GM12878 (cell line): ENCODE measurements at regions of chr1 and their contacts with region 1.

Region 1: DNA sequence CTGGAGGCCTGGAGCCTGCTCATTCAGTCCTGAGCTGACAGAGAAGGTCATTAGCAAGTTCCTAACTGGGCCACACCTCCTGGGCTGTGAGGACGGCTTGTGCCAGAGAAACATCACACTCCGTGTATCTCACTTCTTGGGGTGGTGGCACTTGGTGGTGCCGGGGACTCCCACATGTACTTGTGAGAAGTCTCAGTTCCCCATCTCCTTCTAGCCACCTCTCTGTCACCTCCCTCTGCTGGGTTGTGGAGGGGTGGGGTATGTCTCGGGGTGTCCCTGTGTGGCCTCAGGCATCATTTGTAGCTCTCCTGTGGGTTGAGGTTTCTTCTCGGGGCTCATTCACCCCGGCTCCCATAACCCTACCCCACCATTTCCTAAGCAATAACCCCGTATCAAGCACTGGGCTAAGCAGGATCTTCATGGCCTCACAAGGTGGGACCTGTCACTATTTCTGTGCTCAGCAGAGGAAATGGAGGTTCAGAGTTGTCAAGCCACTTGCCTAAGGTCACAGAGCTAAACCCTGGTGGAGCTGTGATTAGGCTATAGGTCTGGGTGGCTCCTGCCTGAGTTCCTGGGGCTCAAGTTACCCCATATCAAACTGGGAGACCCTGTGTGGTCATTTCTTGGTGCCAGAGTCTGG is 62.5 kb downstream of the UBIAD1 start:
- DNase-seq: peak; percentile 72
- ATAC-seq: peak; percentile 96
- H3K4me3 ChIP-seq: no peak overlapping the region
- H3K27ac ChIP-seq: no peak overlapping the region; the same call in 1 of the 2 replicates
- H3K4me1 ChIP-seq: peaks cover 16% of the 10 kb centered on the region
- H3K27me3 ChIP-seq: peaks cover 0 to 3% of the 10 kb centered on the region in 2 experiments; a peak in 2 of 4 replicates
- CTCF ChIP-seq: no peak
- EP300 ChIP-seq: peak; percentile 21 to 67; a peak in 2 of 4 replicates
- POLR2A ChIP-seq: no peak
- RAD21 ChIP-seq: no peak

Region 2: DNA sequence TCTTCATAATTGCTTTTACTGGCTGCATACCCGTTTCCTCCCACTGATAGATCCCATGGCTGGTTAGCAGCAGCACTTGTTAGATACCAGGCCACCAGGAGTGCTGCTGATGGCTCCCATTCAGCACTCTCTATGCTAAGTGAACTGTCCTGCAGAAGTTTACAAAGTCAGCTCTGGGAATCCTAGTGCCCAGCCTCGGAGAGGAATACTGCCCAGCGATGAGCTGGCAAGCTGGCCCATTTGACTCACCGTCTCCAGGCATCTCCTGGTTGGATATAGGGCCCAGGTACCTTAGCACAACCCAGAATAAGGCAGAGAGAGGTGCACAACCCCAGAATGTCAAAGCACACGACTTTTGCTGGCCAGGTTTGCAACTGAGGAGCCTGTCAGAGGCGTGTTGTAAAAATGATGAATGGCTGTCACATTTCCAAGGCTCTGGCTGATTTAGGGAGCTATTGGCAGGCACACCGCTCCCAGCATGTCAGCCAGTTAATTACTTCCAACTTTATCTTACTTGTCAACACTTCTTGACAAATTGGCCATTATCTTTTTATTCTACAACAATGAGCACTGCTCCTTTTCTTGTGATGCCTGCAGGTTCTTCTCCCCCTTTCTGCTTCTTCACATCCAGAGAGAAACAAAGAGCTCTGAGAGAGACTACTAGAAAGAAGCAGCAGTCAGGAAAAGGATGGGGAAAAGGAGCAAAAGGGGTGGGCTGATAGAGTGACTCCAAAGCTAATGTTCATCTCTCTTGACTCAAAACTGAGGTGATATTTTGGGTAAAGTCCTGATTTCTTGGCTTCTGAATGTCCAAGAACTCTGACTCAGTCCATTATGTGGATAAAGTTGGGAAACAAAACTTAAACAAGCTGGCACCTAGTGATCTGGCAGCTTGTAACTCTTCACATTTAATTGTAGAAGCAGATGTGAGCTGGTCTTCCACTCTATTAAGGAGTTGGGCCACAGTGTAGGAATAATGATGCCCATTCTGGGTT is 157.2 kb before region 1 on chr1:
- CTCF ChIA-PET with region 1: no interaction called
- POLR2A ChIA-PET with region 1: no interaction called
- RAD21 ChIA-PET with region 1: no interaction called
- SMC1A ChIA-PET with region 1: no interaction called
- in situ Hi-C with region 1: no loop called
- intact Hi-C with region 1: no loop called
- DNase-seq: no peak
- ATAC-seq: no peak
- H3K4me3 ChIP-seq: no peak overlapping the region
- H3K27ac ChIP-seq: no peak overlapping the region
- H3K4me1 ChIP-seq: no peaks in the 10 kb centered on the region
- H3K27me3 ChIP-seq: no peaks in the 10 kb centered on the region
- CTCF ChIP-seq: no peak
- EP300 ChIP-seq: no peak
- POLR2A ChIP-seq: no peak
- RAD21 ChIP-seq: no peak

Region 3: DNA sequence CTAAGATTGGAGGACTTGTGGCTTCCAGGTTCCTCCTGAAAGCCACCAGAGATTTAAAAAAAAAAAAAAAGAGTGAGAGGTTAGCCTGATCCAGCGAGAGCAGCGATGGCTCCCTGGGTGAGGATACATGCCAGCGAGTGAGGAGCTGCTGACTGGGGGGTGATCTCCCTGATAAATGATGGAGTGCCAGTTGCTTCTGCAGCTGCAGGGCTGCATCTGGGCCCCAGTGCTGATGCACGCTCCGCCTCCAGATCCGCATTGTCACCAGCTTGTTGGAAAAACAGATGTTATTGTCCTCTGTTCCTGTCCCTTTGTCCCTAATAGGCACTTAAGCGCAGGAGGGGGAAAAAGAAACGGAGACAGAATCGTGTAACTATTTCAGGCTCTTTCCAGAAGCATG is 33.9 kb before region 1 on chr1:
- CTCF ChIA-PET with region 1: no interaction called
- POLR2A ChIA-PET with region 1: no interaction called
- RAD21 ChIA-PET with region 1: no interaction called
- SMC1A ChIA-PET with region 1: no interaction called
- in situ Hi-C with region 1: no loop called
- intact Hi-C with region 1: no loop called
- DNase-seq: no peak
- ATAC-seq: no peak
- H3K4me3 ChIP-seq: no peak overlapping the region
- H3K27ac ChIP-seq: no peak overlapping the region
- H3K4me1 ChIP-seq: no peaks in the 10 kb centered on the region
- H3K27me3 ChIP-seq: no peaks in the 10 kb centered on the region
- CTCF ChIP-seq: no peak
- EP300 ChIP-seq: no peak
- POLR2A ChIP-seq: no peak
- RAD21 ChIP-seq: no peak

Region 4: GRCh38 chr1:11364170-11364569 is 28.6 kb after region 1 on chr1:
- CTCF ChIA-PET with region 1: interaction called, 14 read pairs
- POLR2A ChIA-PET with region 1: no interaction called
- RAD21 ChIA-PET with region 1: interaction called, 4 read pairs
- SMC1A ChIA-PET with region 1: no interaction called
- in situ Hi-C with region 1: no loop called
- intact Hi-C with region 1: no loop called
- DNase-seq: no peak
- ATAC-seq: peak; percentile 41; the same call in 1 of the 3 replicates
- H3K4me3 ChIP-seq: no peak overlapping the region
- H3K27ac ChIP-seq: no peak overlapping the region
- H3K4me1 ChIP-seq: no peaks in the 10 kb centered on the region
- H3K27me3 ChIP-seq: no peaks in the 10 kb centered on the region
- CTCF ChIP-seq: peak; percentile 37 to 53 (median 43); a peak in 4 of 6 replicates
- EP300 ChIP-seq: no peak
- POLR2A ChIP-seq: no peak
- RAD21 ChIP-seq: peak; percentile 56